AG04449 (cell line): ENCODE measurements at regions of chr1 and their contacts with region 1.

Region 1: DNA sequence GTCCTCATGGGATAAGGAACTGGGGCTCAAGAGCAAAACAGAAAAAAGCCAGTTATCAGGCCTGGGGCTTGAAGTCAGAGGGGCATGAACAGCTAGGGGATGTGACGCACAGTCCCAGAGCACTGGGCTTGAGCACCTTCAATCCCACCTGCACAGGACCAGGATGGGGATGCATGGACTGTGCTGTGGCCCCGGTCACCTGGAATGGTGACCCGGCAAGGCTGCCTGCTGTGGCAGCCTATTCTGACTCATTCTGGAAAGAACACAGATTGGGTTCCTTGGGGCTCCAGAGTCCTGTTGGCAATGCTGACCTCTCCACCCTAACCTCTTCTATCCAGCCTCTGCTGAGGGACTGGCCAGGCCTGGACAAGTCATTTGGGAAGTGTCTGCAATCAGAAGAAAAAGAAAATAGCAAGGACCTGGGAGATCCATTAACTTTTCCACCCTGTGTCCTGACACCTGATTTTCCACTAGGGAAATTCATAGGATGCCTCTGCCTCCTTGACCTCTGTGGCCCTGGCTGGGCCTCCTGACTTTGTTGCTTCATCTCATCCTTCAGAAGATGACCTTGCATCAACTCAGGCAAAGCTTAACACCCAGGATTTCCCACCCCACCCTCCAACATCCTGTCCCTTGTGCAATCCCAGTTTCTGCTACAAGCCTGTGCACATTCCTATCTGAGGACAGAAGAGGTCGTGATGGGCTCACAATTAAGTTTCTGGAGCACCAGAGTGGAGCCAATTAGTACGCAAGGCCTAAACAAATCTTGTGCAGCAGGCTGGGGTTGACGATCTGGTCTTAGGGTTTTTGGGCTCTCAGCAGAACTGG is 17.9 kb upstream of the FMOD start:
- DNase-seq: peak; percentile 54
- H3K4me3 ChIP-seq: no peak overlapping the region
- CTCF ChIP-seq: peak; percentile 53

Region 2: DNA sequence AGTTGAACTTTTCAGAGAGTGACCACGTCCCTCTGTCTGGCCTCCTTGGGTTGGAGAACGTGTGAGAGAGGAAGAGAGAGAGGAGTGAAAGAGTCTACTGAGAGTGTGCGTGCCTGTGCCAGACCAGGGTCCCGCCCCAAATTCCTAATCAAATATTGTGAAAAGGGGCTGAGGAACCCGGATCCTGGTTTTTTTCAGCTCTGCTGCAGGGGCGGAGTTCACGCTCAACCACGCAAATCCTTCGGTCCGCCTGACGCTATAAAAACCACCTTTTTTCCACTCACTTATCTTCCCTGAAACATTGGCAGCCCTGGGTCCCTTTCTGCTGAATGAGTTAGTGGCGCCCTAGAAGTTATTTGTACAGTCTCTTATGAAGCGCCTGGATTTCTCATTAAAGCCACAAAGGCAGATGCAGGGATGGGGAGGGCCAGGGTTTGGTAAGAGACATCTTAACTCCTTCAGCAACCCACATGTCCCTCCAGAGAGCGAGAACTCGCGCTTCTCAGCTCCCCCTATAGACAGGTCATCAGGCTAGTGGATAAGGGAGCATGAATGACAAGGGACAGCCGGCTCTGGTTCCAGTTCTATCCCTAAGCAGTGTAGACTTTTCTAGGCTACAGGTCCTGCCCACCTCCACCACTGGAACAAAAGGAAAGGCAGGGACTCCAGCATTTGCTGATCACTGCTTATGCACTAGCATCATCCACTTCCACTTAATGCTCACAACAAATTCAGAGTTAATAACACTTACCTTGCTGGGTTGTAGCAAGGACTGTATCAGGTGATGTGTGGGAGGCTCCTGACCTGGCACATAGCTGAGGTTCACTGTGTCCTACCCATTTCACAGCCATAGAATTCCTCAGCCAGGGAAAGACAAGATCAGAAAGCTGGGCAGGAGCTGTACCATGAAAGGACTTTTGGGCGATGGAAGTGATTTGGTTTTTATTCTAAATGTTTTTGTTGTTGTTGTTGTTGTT is 17.5 kb before region 1 on chr1 and contains the start of gene FMOD:
- CTCF ChIA-PET with region 1: interaction called, 238 read pairs
- POLR2A ChIA-PET with region 1: no interaction called
- DNase-seq: no peak
- H3K4me3 ChIP-seq: peak within 1 kb of the TSS; percentile 6; the same call in 1 of the 2 replicates
- CTCF ChIP-seq: no peak

Region 3: DNA sequence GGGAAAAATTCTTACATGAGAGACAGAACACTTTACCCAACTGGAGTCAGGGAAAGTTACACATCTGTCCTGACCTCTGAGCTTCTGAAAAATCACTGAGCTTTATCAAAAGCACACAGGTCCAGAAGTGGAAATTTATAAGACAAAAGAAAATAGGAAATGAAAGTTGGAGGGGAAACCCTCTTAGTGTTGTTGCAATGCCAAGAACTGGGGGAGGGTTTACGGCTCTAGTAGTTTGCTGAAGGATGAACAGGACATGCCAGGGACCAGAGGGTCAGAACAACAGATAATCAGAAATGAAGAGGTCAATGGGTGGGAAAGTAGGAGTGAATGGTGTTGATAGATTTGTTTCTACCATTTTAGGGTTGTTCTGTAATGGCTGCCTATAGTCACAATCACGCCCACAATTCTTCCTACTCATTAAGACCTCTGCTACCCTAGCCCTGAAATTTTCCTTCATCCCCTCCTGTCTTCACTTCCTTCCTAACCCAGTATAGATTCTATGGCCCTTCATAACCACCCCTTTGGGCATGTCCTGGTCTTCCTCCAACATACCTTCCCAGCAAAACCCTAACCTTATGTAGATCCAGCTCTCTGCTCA is 12.4 kb after region 1 on chr1:
- CTCF ChIA-PET with region 1: interaction called, 10 read pairs
- POLR2A ChIA-PET with region 1: no interaction called
- DNase-seq: no peak
- H3K4me3 ChIP-seq: no peak overlapping the region
- CTCF ChIP-seq: no peak

Region 4: GRCh38 chr1:203395751-203396150 is 26.9 kb after region 1 on chr1:
- CTCF ChIA-PET with region 1: no interaction called
- POLR2A ChIA-PET with region 1: no interaction called
- DNase-seq: no peak
- H3K4me3 ChIP-seq: no peak overlapping the region
- CTCF ChIP-seq: no peak

Region 5: GRCh38 chr1:203440771-203441170 is 71.9 kb after region 1 on chr1:
- CTCF ChIA-PET with region 1: interaction called, 25 read pairs
- POLR2A ChIA-PET with region 1: no interaction called
- DNase-seq: peak; percentile 37
- H3K4me3 ChIP-seq: no peak overlapping the region
- CTCF ChIP-seq: peak; percentile 73

Region 6: GRCh38 chr1:203492082-203492747 is 123.4 kb after region 1 on chr1:
- CTCF ChIA-PET with region 1: interaction called, 57 read pairs
- POLR2A ChIA-PET with region 1: no interaction called
- DNase-seq: no peak
- H3K4me3 ChIP-seq: no peak overlapping the region
- CTCF ChIP-seq: no peak

Region 7: GRCh38 chr1:203702130-203702577 is 333.3 kb after region 1 on chr1:
- CTCF ChIA-PET with region 1: interaction called, 10 read pairs
- POLR2A ChIA-PET with region 1: no interaction called
- DNase-seq: no peak
- H3K4me3 ChIP-seq: no peak overlapping the region
- CTCF ChIP-seq: peak; percentile 68